Right lobe of liver (tissue), 6 donors: ENCODE measurements at regions of chr10 and their contacts with region 1.

Region 1: GRCh38 chr10:132142411-132143161 is 44.2 kb upstream of the DPYSL4 start:
- DNase-seq: peak in 2 of 3 donors; percentile 42 to 58
- ATAC-seq: peak; percentile 66 to 86 (median 81)
- H3K4me3 ChIP-seq: no peak overlapping the region
- H3K27ac ChIP-seq: no peak overlapping the region
- H3K4me1 ChIP-seq: no peaks in the 10 kb centered on the region
- H3K27me3 ChIP-seq: no peaks in the 10 kb centered on the region
- CTCF ChIP-seq: peak; percentile 72 to 89 (median 82)
- POLR2A ChIP-seq: no peak

Region 2: DNA sequence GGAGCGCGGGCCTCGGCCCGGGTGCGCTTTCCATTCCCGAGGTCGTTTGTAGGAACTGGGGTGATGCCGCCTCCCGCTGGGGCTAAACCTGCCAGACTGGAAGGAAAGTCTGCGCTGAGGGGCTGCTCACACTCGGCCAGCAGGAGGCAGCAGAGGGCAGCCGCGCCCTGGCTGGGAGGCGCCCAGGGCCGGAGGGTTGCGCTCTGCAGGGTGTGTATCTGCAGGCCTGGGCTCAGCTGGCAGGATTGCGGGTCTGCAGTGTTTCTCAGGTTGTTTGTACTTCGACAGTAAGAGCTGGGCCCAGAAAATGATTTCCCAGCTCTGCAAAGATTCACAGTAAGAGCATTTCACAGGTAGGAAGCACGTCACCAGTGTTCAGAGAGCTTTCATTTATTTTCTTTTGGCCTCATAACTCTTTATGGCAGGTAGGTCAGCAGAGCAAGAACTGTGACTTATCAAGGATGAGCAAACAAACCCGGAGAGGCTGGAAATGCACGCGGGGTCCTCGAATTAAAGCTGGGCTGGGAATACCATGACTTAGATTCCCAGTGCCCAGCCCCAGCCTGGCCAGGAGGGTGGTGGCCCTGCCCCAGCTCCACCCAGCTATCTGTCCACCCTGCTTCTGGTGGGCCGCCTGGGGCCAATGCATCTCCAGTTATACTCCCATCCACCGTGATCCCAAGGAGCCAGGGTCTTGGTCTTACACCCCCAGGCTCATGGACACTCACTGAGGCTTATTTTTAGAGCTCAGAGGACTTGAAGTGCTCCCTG is 257.0 kb before region 1 on chr10:
- intact Hi-C with region 1: loop called (anchors 5 to 10 kb)
- DNase-seq: peak; percentile 79 to 81 (median 79)
- ATAC-seq: peak; percentile 99 to 100 (median 100)
- H3K4me3 ChIP-seq: no peak overlapping the region
- H3K27ac ChIP-seq: no peak overlapping the region
- H3K4me1 ChIP-seq: no peaks in the 10 kb centered on the region
- H3K27me3 ChIP-seq: no peaks in the 10 kb centered on the region
- CTCF ChIP-seq: peak; percentile 96 to 98 (median 98)
- POLR2A ChIP-seq: no peak

Region 3: DNA sequence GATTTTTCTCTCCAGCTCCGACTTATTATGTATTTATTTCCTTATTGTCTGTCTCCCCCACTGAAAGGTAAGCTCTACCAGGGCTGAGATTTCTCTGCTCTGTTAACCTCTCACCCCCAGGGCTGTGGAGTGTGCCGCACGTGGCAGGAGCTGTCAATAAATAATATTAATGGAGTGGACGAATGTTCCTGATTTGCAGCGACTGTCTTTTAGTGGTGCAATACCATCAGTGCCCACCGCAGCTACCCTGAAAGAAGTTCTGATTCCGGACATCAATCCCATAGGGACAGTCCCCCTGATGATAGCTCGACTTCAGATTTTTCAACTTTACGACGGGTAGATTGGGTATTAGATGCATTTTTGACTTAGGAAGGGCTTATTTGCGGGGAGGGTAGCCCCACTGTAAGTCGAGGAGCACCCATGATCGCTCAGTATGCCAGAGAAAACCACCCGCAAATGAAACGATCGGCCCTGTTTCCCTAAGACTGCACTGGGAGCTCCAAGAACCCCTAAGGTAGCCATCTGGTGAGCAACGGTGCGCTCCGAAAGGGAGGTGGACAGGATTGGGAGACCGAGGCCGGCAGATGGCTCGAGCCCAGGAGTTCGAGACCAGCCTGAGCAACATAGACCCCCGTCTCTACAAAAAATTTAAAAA is 242.8 kb before region 1 on chr10:
- intact Hi-C with region 1: loop called in 1 of 2 experiments (anchors 10 kb)
- DNase-seq: no peak
- ATAC-seq: no peak
- H3K4me3 ChIP-seq: peak overlapping the region; percentile 88 to 96 (median 90)
- H3K27ac ChIP-seq: no peak overlapping the region
- H3K4me1 ChIP-seq: peaks cover 0 to 22% (median 4%) of the 10 kb centered on the region in 4 donors
- H3K27me3 ChIP-seq: no peaks in the 10 kb centered on the region
- CTCF ChIP-seq: no peak
- POLR2A ChIP-seq: no peak

Region 4: DNA sequence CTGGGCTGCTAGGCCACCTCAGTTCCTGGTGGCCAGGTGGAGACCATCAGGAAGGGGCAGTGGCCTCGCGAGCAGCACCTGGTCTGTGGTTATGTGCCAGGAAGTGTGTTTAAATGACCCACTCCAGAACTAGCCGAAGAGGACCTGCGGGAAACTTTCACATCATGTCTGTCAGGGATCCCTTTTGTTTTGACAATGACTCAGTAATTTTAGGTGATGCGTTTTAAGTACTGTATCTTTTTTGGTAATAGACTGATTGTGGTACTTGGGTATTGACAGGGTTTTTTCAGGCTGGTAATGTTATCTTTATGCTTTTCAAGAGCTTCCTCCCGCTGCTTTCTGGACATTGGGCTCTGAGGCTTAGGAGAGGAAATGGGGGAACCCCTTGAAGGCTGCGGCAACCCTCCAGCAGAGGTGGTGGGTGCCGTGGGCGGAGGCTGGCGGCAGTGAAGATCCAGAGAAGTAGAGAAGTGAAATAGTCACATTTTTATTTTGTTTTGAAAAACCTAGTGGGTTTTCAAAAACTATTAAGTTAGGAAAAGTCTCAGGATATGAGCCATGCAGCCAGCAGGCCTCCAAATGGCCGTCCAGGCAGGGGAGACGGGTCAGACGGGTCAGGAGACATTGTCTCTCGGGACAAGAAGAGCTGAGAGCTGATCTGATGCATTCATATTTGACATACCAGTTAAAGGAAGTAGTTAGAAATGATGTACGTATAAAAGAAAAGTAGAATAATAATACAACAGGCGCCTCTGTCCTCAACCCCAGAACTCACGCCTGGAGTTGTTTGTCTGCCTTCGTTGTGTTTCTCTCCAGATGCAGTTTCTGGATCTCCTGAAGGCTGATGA is 214.1 kb before region 1 on chr10:
- intact Hi-C with region 1: no loop called
- DNase-seq: peak in 1 of 3 donors; percentile 23
- ATAC-seq: no peak
- H3K4me3 ChIP-seq: no peak overlapping the region
- H3K27ac ChIP-seq: no peak overlapping the region
- H3K4me1 ChIP-seq: peaks cover 0 to 3% (median 0%) of the 10 kb centered on the region in 4 donors
- H3K27me3 ChIP-seq: no peaks in the 10 kb centered on the region
- CTCF ChIP-seq: no peak
- POLR2A ChIP-seq: no peak

Region 5: DNA sequence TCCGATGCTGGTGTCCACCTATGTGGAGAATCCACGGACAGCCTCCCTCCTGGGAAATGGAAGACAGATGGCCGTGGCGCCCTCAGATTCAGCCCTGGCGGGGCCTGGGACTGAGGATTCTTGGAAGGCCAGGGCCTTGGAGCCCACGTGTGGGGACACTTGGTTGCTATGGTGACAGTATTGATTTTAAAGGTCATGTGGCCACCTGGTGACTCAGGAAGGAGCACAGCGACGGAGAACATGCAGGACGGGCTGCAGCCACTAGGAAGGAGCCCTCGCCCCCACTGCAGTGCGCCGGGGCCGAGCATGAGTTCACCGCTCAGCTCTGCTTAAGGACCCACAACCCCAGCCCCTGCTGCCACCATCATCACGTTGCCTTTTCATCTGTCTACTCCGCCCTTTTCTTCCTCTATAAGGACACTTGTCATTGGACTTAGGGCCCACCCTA is 168.8 kb after region 1 on chr10:
- intact Hi-C with region 1: no loop called
- DNase-seq: peak in 1 of 3 donors; percentile 29
- ATAC-seq: no peak
- H3K4me3 ChIP-seq: no peak overlapping the region
- H3K27ac ChIP-seq: no peak overlapping the region
- H3K4me1 ChIP-seq: peaks cover 0 to 16% (median 0%) of the 10 kb centered on the region in 4 donors
- H3K27me3 ChIP-seq: no peaks in the 10 kb centered on the region
- CTCF ChIP-seq: no peak
- POLR2A ChIP-seq: no peak